T-cell (primary cell): ENCODE measurements at regions of chr3 and their contacts with region 1.

Region 1: DNA sequence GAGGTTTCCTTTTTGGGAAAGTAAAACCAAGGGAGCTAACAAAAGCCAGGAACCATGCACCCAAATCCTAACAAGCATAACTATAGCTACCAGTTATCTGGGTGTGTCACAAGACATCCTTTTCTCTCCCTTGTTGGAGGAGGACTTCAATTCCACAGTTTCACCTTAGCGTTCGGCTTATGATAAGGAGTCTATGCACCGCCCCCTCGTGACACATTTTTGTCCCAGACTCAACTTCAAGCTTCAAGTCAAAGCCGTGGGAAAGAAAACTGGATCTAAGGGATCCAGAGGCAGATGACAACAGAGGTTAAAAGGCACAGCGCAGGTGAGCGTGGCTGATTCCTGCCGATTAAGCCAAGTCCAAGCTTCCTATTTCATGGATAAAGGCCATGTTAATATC is 13.9 kb upstream of the FXR1 start:
- DNase-seq: no peak
- ATAC-seq: no peak
- H3K4me3 ChIP-seq: no peak overlapping the region
- H3K4me3 Mint-ChIP-seq: no peak overlapping the region
- H3K27ac ChIP-seq: no peak overlapping the region
- H3K27ac Mint-ChIP-seq: no peak overlapping the region
- H3K4me1 ChIP-seq: no peaks in the 10 kb centered on the region
- H3K4me1 Mint-ChIP-seq: no peaks in the 10 kb centered on the region
- H3K27me3 ChIP-seq: peaks cover 0 to 7% of the 10 kb centered on the region in 2 experiments
- H3K27me3 Mint-ChIP-seq: peaks cover 3 to 5% of the 10 kb centered on the region in 2 donors

Region 2: DNA sequence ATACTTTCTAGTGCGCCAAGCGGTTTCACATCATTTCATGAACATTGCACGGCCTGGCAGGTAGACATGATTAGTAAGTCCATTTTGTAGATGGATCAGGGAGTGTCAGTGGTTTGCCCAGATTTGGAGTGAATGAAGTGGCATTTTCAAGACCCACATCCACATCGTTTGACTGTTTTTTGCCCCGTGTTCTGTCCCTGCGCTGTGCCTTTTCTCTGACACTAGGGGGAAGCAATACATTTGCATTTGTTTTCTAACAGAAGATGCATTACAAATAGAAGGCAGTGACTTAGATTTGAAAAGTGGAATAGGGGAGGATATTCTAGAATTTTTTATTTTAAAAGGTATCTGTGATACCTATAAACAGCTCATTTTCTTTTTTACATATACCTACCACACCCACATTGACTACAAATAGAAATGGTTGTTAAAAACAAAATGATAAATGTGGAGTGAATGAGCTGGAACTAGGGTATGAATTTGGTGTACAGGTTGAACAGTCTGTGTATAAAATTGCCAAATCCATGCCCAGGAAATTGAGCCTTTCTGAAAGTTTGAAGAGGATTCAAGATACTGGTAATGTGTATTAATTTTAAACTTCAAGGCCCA is 1147.7 kb before region 1 on chr3:
- CTCF ChIA-PET with region 1: interaction called in 1 of 2 experiments, 12 read pairs
- POLR2A ChIA-PET with region 1: no interaction called
- DNase-seq: peak in 1 of 35 experiments; percentile 3
- ATAC-seq: no peak
- H3K4me3 ChIP-seq: no peak overlapping the region
- H3K4me3 Mint-ChIP-seq: no peak overlapping the region
- H3K27ac ChIP-seq: no peak overlapping the region
- H3K27ac Mint-ChIP-seq: no peak overlapping the region
- H3K4me1 ChIP-seq: no peaks in the 10 kb centered on the region
- H3K4me1 Mint-ChIP-seq: no peaks in the 10 kb centered on the region
- H3K27me3 ChIP-seq: no peaks in the 10 kb centered on the region
- H3K27me3 Mint-ChIP-seq: no peaks in the 10 kb centered on the region

Region 3: DNA sequence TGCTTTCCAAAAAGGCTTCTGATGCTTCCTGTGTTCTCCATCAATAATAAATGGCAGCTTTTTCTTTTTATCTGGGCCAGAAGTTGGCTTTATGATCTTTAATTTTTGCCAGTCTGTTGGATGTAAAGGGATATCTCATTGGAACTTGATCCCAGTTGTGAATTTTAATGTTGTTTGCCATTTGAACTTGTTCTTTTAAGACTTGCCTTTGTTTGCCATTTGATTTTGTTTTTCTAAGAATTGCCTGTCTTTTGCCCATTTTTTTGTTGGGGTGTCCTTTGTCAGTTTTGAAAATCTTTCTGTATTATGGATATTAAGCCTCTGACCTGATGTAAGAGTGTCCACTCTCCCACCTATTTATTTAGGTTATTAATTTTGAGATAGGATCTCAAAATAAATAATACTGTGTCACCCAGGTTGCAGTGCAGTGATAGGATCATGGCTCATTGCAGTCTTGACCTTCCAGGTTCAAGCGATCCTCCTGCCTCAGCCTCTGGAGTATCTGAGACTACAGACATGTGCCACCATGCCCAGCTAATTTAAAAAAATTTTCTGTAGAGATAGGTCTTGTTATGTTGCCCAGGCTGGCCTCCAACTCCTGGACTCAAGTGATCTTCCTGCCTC is 23.8 kb after region 1 on chr3:
- CTCF ChIA-PET with region 1: interaction called in 1 of 2 experiments, 10 read pairs
- POLR2A ChIA-PET with region 1: no interaction called
- DNase-seq: no peak
- ATAC-seq: no peak
- H3K4me3 ChIP-seq: no peak overlapping the region
- H3K4me3 Mint-ChIP-seq: no peak overlapping the region
- H3K27ac ChIP-seq: no peak overlapping the region
- H3K27ac Mint-ChIP-seq: peak overlapping the region in 1 of 2 donors; percentile 22
- H3K4me1 ChIP-seq: peaks cover 3 to 32% of the 10 kb centered on the region in 2 experiments
- H3K4me1 Mint-ChIP-seq: peaks cover 86 to 89% (median 87%) of the 10 kb centered on the region in 3 donors
- H3K27me3 ChIP-seq: no peaks in the 10 kb centered on the region
- H3K27me3 Mint-ChIP-seq: no peaks in the 10 kb centered on the region